Activated CD4-positive, alpha-beta memory T cell treated with anti-CD3 and anti-CD28 coated beads for 36 hours (primary cell): ENCODE measurements at regions of chr10 and their contacts with region 1.

Region 1: DNA sequence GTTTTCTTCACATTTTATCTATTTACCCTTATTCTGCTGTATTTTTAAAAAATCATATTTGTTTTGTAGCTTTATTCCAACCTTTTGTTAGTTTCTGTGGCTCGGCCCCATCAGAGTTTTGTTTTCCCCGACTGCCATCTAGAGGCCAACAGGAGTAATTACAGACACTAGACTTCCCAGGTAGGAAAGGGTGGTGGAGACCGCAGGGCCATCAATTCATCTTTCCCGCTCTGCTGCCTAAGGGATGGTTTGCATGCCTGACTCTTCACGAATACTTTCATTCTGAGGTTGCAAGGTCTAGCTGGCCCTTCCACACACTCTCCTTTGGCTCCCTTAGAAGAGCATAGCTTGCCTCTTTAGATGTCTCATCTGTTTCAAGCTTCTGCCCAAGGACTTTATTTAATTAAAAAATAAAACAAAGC is 38.3 kb downstream of the LYZL2 start:
- DNase-seq: peak; percentile 44
- H3K4me3 Mint-ChIP-seq: no peak overlapping the region
- H3K27ac Mint-ChIP-seq: no peak overlapping the region
- H3K4me1 Mint-ChIP-seq: no peaks in the 10 kb centered on the region
- H3K27me3 Mint-ChIP-seq: peaks cover 5% of the 10 kb centered on the region

Region 2: DNA sequence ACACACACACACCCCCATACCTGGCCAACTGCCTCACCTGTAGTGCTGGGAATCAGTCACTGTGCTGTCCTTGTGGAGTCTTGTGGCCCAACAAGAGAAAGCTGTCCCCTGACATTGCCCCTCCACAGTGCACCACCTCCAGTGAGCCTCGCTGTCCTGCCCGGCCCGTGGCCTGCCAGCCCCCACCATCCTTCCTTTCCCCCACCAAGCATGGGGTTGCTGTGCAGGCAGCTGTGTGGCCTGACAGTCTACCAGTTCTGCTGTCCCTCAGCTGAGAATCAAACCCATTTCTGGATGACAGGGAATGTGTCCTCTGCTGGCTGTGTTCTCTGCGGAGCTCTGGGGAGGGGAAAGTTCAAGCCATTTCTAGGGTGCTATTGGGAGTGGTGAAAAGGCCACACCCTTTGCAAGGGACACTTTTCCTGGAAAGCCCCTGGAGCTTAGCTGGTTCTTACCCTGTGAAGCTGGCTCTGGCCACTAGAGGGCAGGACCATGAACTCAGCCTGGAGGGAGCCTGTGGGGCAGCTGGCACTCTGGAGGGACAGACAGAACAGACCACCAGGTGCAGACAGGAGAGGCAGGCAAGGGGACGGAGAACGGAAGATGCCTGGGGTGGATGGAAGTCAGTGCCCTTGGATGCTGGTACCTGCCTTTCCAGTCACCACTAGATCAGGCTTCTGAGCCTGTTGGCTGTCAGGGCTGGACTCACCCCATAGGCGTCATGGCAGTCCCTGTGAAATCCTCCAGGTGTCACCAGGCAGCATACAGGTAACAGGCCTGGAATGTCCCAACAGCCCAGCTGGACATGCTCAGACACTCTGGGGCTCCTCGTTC is 231.7 kb before region 1 on chr10:
- CTCF ChIA-PET with region 1: interaction called, 51 read pairs
- POLR2A ChIA-PET with region 1: no interaction called
- intact Hi-C with region 1: no loop called
- DNase-seq: peak; percentile 78
- H3K4me3 Mint-ChIP-seq: no peak overlapping the region
- H3K27ac Mint-ChIP-seq: no peak overlapping the region
- H3K4me1 Mint-ChIP-seq: peaks cover 4% of the 10 kb centered on the region
- H3K27me3 Mint-ChIP-seq: no peaks in the 10 kb centered on the region

Region 3: GRCh38 chr10:30413996-30414576 is 177.2 kb before region 1 on chr10:
- CTCF ChIA-PET with region 1: interaction called, 30 read pairs
- POLR2A ChIA-PET with region 1: no interaction called
- intact Hi-C with region 1: no loop called
- DNase-seq: no peak
- H3K4me3 Mint-ChIP-seq: no peak overlapping the region
- H3K27ac Mint-ChIP-seq: no peak overlapping the region
- H3K4me1 Mint-ChIP-seq: peaks cover 17% of the 10 kb centered on the region
- H3K27me3 Mint-ChIP-seq: no peaks in the 10 kb centered on the region

Region 4: DNA sequence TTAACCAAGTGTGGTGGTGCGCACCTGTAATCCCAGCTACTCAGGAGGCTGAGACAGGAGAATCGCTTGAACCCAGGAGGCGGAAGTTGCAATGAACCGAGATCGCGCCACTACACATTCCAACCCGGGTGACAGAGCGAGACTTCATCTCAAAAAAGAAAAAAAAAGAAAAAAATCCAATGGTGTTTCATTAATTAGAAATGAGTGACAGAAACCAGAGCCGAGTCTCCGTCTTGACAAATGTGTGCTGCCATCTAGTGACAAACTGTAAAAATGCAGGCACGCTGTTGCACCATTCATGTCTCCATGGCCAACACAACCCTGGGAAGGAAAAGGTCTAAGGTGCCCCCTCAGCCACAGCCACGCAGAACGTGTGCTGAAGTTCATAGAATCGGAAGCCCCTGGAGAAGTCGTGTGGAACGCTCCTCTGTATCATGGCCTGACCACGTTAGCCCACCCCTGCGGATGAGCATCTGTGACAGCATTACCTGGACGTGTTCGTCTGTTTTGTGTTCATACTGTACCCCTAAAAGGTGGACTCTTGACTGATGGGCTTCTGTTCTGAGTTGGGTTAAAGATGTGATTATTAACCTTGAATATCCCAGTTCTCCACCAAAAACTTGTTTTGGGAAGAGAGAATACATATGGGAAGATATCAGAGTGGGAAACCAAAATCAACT is 56.7 kb before region 1 on chr10:
- CTCF ChIA-PET with region 1: interaction called, 22 read pairs
- POLR2A ChIA-PET with region 1: no interaction called
- intact Hi-C with region 1: loop called (anchors 1 kb)
- DNase-seq: peak; percentile 78
- H3K4me3 Mint-ChIP-seq: no peak overlapping the region
- H3K27ac Mint-ChIP-seq: no peak overlapping the region
- H3K4me1 Mint-ChIP-seq: peaks cover 20% of the 10 kb centered on the region
- H3K27me3 Mint-ChIP-seq: no peaks in the 10 kb centered on the region

Region 5: GRCh38 chr10:30557884-30558283 is 33.4 kb before region 1 on chr10:
- CTCF ChIA-PET with region 1: interaction called, 18 read pairs
- POLR2A ChIA-PET with region 1: no interaction called
- intact Hi-C with region 1: no loop called
- DNase-seq: no peak
- H3K4me3 Mint-ChIP-seq: no peak overlapping the region
- H3K27ac Mint-ChIP-seq: no peak overlapping the region
- H3K4me1 Mint-ChIP-seq: peaks cover 5% of the 10 kb centered on the region
- H3K27me3 Mint-ChIP-seq: peaks cover 1% of the 10 kb centered on the region

Region 6: GRCh38 chr10:30639946-30640786 is 48.9 kb after region 1 on chr10:
- CTCF ChIA-PET with region 1: interaction called, 18 read pairs
- POLR2A ChIA-PET with region 1: no interaction called
- intact Hi-C with region 1: no loop called
- DNase-seq: no peak
- H3K4me3 Mint-ChIP-seq: no peak overlapping the region
- H3K27ac Mint-ChIP-seq: no peak overlapping the region
- H3K4me1 Mint-ChIP-seq: peaks cover 10% of the 10 kb centered on the region
- H3K27me3 Mint-ChIP-seq: peaks cover 42% of the 10 kb centered on the region

Region 7: GRCh38 chr10:30662814-30663213 is 71.6 kb after region 1 on chr10:
- CTCF ChIA-PET with region 1: no interaction called
- POLR2A ChIA-PET with region 1: no interaction called
- intact Hi-C with region 1: no loop called
- DNase-seq: no peak
- H3K4me3 Mint-ChIP-seq: no peak overlapping the region
- H3K27ac Mint-ChIP-seq: no peak overlapping the region
- H3K4me1 Mint-ChIP-seq: no peaks in the 10 kb centered on the region
- H3K27me3 Mint-ChIP-seq: peaks cover 28% of the 10 kb centered on the region